Gastrocnemius medialis (tissue), 4 donors: ENCODE measurements at regions of chr10 and their contacts with region 1.

Region 1: DNA sequence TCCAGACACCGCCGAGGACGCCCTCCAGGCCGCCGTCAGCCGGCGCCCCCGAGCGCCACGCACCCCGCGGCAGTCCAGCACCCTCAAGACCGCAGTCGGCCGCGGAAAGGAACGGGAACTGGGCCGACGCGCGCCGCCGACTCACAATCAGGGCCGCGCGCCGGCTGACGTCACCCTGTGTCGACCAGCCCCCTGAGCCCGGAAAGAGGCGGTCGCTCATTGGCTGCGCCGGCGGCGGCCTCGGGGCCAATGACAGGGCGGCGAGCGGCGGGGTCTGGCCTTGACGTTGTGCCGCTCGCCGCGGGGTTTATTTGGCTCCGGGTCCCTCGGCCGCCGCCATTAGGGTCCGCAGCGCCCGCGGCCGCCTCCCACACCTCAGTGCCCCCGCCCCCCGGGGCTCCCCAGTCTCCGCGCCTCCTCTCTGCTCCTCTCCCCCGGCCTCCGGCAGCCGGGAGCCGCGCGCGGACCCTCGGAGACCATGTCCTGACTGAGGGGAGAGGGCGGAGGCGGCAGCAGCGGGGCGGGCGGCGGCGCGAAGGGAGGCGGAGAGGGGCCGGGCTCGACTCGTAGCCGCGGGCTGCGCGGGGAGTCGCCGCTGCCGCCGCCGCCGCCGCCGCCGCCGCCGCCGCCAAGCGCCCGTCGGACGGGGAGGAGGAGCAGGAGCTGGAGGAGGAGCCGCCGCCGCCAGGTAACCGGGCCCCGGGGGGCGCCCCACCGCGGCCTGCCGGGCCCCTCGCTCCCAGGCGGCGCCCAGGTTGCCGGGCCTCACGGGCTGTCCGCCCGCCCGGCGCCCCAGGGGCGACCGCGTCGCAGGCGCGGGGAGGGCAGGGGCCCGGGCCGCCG is 25.1 kb upstream of the ZRANB1 start:
- DNase-seq: peak; percentile 98
- ATAC-seq: peak; percentile 66 to 67
- H3K4me3 ChIP-seq: peak overlapping the region; percentile 76 to 90 (median 80)
- H3K27ac ChIP-seq: peak overlapping the region; percentile 96 to 99 (median 98)
- H3K4me1 ChIP-seq: peaks cover 46 to 55% of the 10 kb centered on the region in 2 donors
- H3K27me3 ChIP-seq: no peaks in the 10 kb centered on the region
- CTCF ChIP-seq: peak in 1 of 5 experiments; percentile 8
- POLR2A ChIP-seq: peak; percentile 99

Region 2: GRCh38 chr10:124560377-124561105 is 356.3 kb before region 1 on chr10:
- in situ Hi-C with region 1: no loop called
- intact Hi-C with region 1: no loop called
- DNase-seq: peak; percentile 87 to 93
- ATAC-seq: peak; percentile 85 to 93
- H3K4me3 ChIP-seq: peak overlapping the region in 2 of 4 donors; percentile 18 to 25
- H3K27ac ChIP-seq: peak overlapping the region; percentile 94 to 99 (median 95)
- H3K4me1 ChIP-seq: peaks cover 50 to 68% of the 10 kb centered on the region in 2 donors
- H3K27me3 ChIP-seq: no peaks in the 10 kb centered on the region
- CTCF ChIP-seq: no peak
- POLR2A ChIP-seq: peak; percentile 29 to 68

Region 3: DNA sequence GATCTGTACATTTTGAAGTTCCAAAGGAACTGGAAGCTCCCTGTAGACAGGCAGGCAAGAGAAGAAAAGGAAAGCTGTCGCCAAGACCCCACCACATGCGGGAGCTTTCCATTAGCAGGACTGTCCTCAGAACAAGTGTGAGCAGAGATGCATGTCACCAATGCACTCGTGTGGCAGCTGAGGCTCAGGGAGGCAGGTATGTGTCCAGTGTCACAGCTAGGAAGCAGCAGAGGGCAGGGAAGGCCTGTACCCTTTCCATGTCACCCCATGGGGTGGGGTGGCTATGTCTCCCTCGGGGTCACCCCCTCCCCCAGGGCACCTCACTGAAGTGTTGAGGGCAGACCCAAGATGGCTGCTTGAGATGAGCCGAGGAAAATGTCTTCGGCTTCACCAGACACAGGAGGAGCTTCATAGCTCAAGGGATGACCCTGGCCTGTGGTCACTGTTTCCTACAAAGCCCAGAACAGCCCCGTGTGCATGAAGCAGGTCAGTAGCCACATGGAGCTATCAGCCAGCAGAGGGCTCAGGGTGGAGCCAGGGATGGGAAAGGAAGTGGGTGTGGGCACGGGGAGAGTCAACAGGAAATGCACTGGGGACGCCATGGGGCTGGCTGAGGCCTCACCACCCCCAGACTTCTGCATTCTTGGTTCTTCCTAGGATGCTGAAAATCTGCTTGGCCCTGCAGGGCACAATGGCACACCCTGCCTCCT is 269.2 kb before region 1 on chr10:
- in situ Hi-C with region 1: no loop called
- intact Hi-C with region 1: loop called (anchors 10 kb)
- DNase-seq: peak; percentile 51 to 68
- ATAC-seq: peak in 1 of 2 donors; percentile 13
- H3K4me3 ChIP-seq: no peak overlapping the region
- H3K27ac ChIP-seq: peak overlapping the region; percentile 76 to 85 (median 82)
- H3K4me1 ChIP-seq: peaks cover 76 to 85% of the 10 kb centered on the region in 2 donors
- H3K27me3 ChIP-seq: no peaks in the 10 kb centered on the region
- CTCF ChIP-seq: peak in 2 of 5 experiments; percentile 9
- POLR2A ChIP-seq: no peak

Region 4: DNA sequence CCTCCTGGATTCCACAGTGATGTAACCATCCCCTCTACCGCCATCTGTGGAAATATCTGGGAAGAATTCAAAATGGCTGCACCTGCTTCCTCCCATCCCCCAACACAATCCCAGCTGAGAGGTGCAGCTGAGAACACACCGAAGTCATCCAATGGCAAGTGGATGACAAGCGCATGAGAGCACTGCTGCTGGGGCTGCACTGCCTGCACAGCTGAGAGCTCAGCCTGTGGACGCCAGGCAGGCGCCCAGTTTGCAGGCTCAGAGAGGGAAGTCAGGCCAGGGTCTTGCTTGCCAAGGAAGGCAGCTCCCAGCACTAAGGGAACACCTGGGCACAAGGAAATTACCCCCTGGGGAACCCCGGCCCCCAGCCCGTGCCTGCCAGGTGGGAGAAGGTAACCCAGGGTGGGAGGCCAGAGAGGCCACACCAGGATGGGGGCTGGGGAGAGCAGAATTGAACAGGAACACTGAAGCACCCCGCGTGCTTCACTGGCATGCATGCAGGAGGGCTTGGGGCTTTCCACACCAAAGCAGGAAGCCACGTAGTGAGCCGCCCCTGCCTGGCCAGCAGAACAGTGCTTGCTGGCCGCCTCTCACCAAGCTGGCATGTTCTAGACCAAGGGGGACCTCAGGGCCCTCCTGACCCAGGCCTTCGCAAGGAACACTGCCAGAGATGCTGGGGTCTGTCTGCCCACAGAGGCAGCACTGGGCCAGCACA is 218.8 kb before region 1 on chr10:
- in situ Hi-C with region 1: no loop called
- intact Hi-C with region 1: loop called (anchors 5 kb)
- DNase-seq: no peak
- ATAC-seq: peak in 1 of 2 donors; percentile 10
- H3K4me3 ChIP-seq: no peak overlapping the region
- H3K27ac ChIP-seq: peak overlapping the region; percentile 93 to 98 (median 96)
- H3K4me1 ChIP-seq: peaks cover 79 to 97% of the 10 kb centered on the region in 2 donors
- H3K27me3 ChIP-seq: no peaks in the 10 kb centered on the region
- CTCF ChIP-seq: no peak
- POLR2A ChIP-seq: peak in 1 of 2 donors; percentile 26

Region 5: DNA sequence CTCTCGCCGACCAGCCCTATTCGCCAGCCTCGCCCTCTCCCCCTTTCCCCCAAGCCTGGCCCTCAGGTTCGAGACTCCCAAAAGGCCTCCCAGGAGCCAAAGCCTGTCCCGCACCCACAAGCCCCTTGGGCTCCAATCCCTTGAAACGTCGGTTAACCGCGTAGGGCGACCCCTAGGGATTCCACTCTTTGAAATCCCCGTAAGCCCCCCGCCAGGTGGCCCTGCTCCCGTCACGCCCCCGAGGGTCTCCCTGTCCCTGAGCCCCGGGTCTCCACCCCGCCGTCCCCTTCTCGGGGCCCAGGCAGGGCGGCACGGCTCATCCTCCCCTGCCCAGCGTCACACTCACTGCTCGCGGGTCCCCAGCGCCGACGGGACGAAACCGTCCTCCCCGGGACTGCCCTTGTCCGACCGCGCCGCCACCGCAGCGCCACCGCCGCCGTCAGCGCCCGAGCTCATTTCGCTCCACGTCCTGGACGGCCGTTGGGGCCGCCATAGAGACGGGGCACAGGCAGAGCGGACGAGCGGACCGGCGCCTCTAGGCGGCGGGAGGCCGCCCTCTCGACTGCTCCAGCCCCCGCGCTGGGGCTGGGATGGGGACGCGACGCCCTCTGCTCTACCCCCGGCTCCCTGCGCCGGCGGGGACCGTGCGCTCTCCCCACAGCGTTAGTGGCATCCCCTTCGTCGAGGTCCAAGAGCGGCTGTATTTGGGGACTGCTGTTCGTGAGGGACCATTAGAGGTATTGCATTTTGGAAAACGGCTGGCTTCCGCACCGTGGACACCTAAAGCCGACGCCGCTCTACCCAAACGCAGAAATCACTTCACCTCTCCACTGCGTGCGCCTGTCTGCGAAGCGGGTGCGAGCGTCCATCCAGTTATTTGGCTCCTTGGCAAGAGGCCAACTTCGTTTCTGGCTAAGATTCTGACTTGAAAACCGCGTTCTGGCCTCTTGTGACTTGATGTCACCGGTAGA is 125.1 kb before region 1 on chr10 and contains the start of gene EEF1AKMT2:
- in situ Hi-C with region 1: loop called in 1 of 4 experiments (anchors 10 kb)
- intact Hi-C with region 1: loop called (anchors 5 kb)
- DNase-seq: peak; percentile 51 to 70
- ATAC-seq: peak; percentile 95
- H3K4me3 ChIP-seq: peak within 1 kb of the TSS; percentile 74 to 99 (median 93)
- H3K27ac ChIP-seq: peak within 1 kb of the TSS; percentile 83 to 97 (median 90)
- H3K4me1 ChIP-seq: peaks cover 0 to 5% of the 10 kb centered on the region in 2 donors
- H3K27me3 ChIP-seq: no peaks in the 10 kb centered on the region
- CTCF ChIP-seq: peak; percentile 56 to 79 (median 75)
- POLR2A ChIP-seq: peak; percentile 47 to 63
- total RNA-seq, gene EEF1AKMT2: 7.9 to 13.5 (median 9.6) TPM

Region 6: GRCh38 chr10:124943301-124944092 is 26.7 kb after region 1 on chr10:
- in situ Hi-C with region 1: no loop called
- intact Hi-C with region 1: loop called (anchors 2 kb)
- DNase-seq: no peak
- ATAC-seq: peak; percentile 84 to 90
- H3K4me3 ChIP-seq: peak overlapping the region; percentile 1 to 46 (median 15)
- H3K27ac ChIP-seq: peak overlapping the region; percentile 85 to 90 (median 87)
- H3K4me1 ChIP-seq: peaks cover 92 to 96% of the 10 kb centered on the region in 2 donors
- H3K27me3 ChIP-seq: no peaks in the 10 kb centered on the region
- CTCF ChIP-seq: no peak
- POLR2A ChIP-seq: peak in 1 of 2 donors; percentile 63

Region 7: DNA sequence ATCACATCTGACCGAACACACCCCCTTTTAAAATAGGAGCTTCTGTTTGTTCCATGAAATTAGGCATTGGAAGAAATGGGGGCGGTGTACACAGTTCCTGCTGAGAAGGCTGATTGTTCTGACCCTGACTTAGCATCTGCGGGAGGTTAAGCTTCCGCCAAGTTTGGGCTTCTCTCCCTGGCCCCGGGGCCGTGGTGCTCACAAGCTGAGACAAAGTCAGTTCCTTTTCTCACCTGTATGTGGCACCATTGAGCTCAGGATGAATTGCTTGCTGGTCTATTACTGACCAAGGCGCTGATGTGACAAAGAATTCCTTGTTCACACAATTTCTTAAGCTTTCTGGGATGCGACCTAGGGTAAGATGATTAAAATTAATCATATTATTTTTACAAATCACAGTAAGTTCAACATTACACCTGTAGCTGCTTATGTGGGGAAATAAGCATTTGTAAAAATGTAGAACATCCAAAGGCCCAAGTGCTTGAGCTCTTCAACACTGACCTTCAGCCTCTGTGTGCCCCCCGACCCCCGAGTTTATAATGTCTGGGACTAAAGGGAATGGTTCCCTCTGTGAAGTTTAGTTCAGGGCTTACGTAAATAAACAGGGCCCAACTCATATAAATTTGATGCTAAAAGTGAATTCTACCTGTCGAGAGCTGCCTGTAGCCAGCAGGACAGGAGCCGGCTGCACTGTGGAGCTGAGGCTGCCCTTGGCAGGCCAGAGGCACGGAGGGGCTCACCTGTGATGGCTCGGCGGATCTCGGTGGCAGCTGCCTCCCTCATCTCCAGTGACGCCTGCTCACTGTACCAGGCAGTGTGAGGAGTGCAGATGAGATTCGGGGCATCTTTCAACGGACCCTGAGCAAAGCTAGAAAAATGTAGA is 75.9 kb after region 1 on chr10:
- in situ Hi-C with region 1: no loop called
- intact Hi-C with region 1: loop called (anchors 5 kb)
- DNase-seq: peak in 1 of 2 donors; percentile 77
- ATAC-seq: peak; percentile 48 to 66
- H3K4me3 ChIP-seq: no peak overlapping the region
- H3K27ac ChIP-seq: peak overlapping the region; percentile 71 to 83 (median 78)
- H3K4me1 ChIP-seq: peaks cover 24 to 28% of the 10 kb centered on the region in 2 donors
- H3K27me3 ChIP-seq: no peaks in the 10 kb centered on the region
- CTCF ChIP-seq: peak; percentile 76 to 86 (median 84)
- POLR2A ChIP-seq: no peak

Region 8: DNA sequence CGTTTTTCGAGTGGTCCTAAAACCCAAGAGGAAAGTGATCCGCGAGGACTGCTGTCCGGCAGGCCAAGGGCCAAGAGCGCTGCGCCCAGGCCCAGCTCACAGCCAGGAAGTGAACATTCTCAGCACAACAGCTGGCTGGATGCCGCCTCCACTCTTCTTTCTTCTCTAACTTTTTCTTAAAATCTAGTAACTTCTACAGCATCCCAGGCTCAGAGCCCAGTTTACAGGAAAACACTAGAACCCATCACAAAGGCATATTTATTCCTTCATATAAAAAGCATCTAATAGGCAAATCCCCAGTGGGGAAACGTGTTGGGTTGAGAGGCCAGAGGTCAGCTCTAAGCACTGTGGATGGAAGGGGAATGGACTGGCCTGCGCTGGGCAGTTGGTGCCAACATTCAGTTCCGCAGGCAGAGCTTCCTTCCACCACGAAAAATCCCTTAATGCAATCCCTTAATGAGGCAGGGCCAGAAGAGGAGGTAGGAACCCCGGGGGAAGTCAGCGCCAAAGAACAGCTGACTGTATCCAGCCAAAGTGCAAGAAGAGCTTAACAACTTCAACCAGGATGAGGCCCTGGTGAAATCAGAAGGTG is 99.9 kb after region 1 on chr10:
- in situ Hi-C with region 1: no loop called
- intact Hi-C with region 1: loop called (anchors 2 kb)
- DNase-seq: peak; percentile 72 to 87
- ATAC-seq: peak; percentile 62 to 69
- H3K4me3 ChIP-seq: peak overlapping the region; percentile 13 to 33 (median 19)
- H3K27ac ChIP-seq: peak overlapping the region; percentile 90 to 93 (median 91)
- H3K4me1 ChIP-seq: peaks cover 95 to 100% of the 10 kb centered on the region in 2 donors
- H3K27me3 ChIP-seq: no peaks in the 10 kb centered on the region
- CTCF ChIP-seq: no peak
- POLR2A ChIP-seq: peak in 1 of 2 donors; percentile 32